Activated naive CD4-positive, alpha-beta T cell treated with anti-CD3 and anti-CD28 coated beads for 36 hours (primary cell): ENCODE measurements at regions of chr2 and their contacts with region 1.

Region 1: GRCh38 chr2:97728091-97728731 is 14.8 kb downstream of the ZAP70 start:
- DNase-seq: peak; percentile 17
- H3K4me3 Mint-ChIP-seq: no peak overlapping the region
- H3K27ac Mint-ChIP-seq: peak overlapping the region; percentile 78
- H3K4me1 Mint-ChIP-seq: peaks cover 51% of the 10 kb centered on the region
- H3K27me3 Mint-ChIP-seq: no peaks in the 10 kb centered on the region

Region 2: DNA sequence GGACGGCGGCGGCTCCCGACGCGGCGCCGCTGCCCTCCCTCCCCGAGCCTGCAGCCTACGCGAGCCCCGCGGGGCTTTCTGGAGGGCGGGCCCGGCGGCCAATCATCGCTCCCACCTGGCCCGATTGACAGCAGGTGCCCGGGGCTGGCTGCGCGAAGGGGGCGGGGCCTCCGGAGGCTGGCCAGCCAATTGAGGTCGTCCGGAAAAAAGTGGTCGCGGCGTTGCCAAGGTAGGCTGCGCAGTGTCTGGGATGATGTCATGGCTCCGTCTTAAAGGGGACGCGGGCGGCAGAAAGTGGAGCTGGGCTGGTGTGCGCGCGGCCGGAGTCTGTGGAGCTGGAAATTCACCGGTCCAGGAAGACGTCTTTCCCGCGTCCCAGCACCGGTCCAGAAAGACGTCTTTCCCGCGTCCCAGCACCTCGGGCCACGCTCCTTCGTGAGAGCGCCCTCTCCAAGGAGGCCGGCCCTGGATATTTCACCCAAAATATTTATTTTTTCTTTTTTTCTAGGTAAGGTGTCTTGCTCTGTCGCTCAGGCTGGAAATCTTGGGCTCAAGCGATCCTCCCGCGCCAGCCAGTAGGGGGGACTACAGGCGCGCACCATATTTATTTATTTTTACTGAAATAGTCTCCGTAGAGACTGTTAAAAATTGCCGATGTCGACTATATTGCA is 64.1 kb before region 1 on chr2 and contains the start of gene ACTR1B:
- CTCF ChIA-PET with region 1: no interaction called
- intact Hi-C with region 1: no loop called
- DNase-seq: peak; percentile 98
- H3K4me3 Mint-ChIP-seq: peak within 1 kb of the TSS; percentile 93
- H3K27ac Mint-ChIP-seq: peak within 1 kb of the TSS; percentile 98
- H3K4me1 Mint-ChIP-seq: peaks cover 31% of the 10 kb centered on the region
- H3K27me3 Mint-ChIP-seq: no peaks in the 10 kb centered on the region
- total RNA-seq, gene ACTR1B: 103 to 104 TPM

Region 3: GRCh38 chr2:97740590-97741182 is 12.5 kb after region 1 on chr2:
- CTCF ChIA-PET with region 1: interaction called, 34 read pairs
- intact Hi-C with region 1: no loop called
- DNase-seq: peak; percentile 50
- H3K4me3 Mint-ChIP-seq: no peak overlapping the region
- H3K27ac Mint-ChIP-seq: peak overlapping the region; percentile 72
- H3K4me1 Mint-ChIP-seq: peaks cover 37% of the 10 kb centered on the region
- H3K27me3 Mint-ChIP-seq: no peaks in the 10 kb centered on the region

Region 4: DNA sequence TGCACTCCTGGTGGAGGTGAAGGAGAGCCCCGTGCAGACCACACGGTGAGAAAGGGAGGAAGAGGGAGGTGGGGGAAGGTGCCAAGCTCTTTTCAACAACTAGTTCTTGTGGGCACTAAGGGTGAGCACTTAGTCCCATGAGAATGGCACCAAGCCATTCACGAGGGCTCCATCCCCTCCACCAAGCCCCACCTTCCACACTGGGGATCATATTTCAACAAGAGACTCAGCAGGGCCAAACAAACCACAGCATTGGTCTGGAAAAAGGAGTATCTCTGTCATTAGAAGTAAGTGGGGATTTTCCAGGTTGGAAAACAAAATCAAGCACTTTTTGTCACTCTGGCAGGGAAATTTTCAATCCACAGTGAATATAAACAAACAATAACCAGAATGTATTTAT is 23.5 kb after region 1 on chr2:
- CTCF ChIA-PET with region 1: interaction called, 16 read pairs
- intact Hi-C with region 1: no loop called
- DNase-seq: no peak
- H3K4me3 Mint-ChIP-seq: no peak overlapping the region
- H3K27ac Mint-ChIP-seq: no peak overlapping the region
- H3K4me1 Mint-ChIP-seq: peaks cover 10% of the 10 kb centered on the region
- H3K27me3 Mint-ChIP-seq: no peaks in the 10 kb centered on the region